Dorsolateral prefrontal cortex (tissue), 120 donors: ENCODE measurements at regions of chr9 and their contacts with region 1.

Region 1: GRCh38 chr9:27365707-27366376 is 68.9 kb upstream of the EQTN start:
- DNase-seq: no peak
- H3K4me3 ChIP-seq: no peak overlapping the region
- H3K27ac ChIP-seq: peak overlapping the region in 56 of 59 donors; percentile 35 to 94 (median 88)
- H3K27me3 ChIP-seq: no peaks in the 10 kb centered on the region
- CTCF ChIP-seq: no peak

Region 2: DNA sequence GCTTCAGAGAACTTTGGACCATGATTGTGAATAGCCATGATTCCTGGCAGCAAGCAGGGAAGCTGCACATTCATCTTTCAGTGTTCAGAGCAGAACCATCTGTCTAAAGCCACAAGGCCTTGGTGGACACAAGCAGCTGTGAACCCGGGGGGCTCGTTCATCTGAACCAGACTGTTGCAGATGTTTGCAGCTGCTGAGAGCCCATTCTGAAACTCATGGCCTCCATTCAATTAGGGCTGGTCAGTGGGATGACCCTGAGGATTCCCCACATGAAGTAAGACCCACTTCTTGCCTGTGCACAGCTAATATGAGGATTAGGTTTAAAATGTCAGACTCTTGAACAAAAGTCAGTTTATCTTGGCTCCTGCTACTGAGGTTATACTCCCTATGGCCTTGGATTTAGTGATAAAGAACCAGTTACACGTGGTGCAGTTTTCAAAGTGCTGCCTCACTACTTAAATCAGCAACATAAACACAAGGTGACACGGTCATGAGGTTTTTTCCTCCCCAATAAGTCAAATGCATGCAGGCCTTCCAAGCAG is 48.4 kb after region 1 on chr9:
- intact Hi-C with region 1: loop called in 1 of 2 experiments (anchors 5 kb)
- DNase-seq: no peak
- H3K4me3 ChIP-seq: peak overlapping the region in 43 of 59 donors; percentile 11 to 64 (median 47)
- H3K27ac ChIP-seq: peak overlapping the region in 58 of 59 donors; percentile 12 to 90 (median 78)
- H3K27me3 ChIP-seq: no peaks in the 10 kb centered on the region
- CTCF ChIP-seq: no peak